CD4-positive, alpha-beta T cell (primary cell): ENCODE measurements at regions of chr3 and their contacts with region 1.

Region 1: DNA sequence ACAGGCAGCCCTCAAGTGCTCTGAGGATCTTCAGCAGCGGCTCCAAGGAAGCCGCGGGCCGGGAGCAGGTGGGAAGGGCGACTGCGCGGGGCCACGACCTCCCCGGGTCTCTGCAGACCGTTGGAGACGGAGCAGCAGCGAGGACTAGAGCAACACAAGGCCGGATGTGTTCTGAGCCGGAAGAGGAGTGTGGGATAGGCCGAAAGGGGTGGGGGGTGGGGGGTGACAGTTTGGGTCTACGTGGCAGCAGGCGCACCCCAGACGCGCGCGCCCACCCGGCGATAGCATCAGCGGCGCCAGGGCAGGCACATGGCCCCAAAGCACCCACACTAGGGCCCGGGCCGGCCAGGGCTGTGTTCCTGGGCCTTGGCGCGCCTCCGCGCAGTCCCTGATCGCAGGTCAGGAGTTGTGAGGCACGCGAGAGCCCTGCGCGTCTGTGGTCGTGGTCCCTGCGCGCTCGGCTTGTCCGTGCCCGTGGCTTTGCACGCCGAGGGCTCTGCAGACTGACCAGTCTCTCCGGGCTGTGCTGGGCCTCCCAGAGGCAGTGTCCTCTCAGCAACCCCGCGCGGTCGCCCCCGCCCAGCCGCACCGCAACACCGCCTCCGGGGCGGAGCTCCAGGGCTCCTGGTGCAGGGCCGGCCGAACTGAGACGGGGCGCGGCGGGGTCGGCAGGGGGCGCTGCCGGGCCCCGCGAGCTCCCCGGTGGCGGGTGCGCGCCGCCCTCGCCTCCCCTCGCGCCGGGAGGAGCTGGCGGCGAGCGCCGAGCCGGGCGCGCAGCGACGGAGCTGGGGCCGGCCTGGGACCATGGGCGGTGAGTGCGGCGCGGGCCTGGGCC is at the start of gene PXYLP1:
- DNase-seq: peak; percentile 80 to 94 (median 89)
- ATAC-seq: peak; percentile 89
- H3K4me3 ChIP-seq: peak within 1 kb of the TSS; percentile 88
- H3K4me3 Mint-ChIP-seq: peak within 1 kb of the TSS; percentile 96
- H3K27ac ChIP-seq: peak within 1 kb of the TSS; percentile 76 to 86
- H3K27ac Mint-ChIP-seq: peak within 1 kb of the TSS; percentile 96
- H3K4me1 ChIP-seq: peaks cover 51% of the 10 kb centered on the region
- H3K4me1 Mint-ChIP-seq: peaks cover 66% of the 10 kb centered on the region
- H3K27me3 ChIP-seq: no peaks in the 10 kb centered on the region
- H3K27me3 Mint-ChIP-seq: no peaks in the 10 kb centered on the region
- CTCF ChIP-seq: peak; percentile 38
- total RNA-seq, gene PXYLP1: 21.2 to 22.6 TPM

Region 2: GRCh38 chr3:141243271-141243707 is 12.0 kb after region 1 on chr3:
- CTCF ChIA-PET with region 1: interaction called, 14 read pairs
- POLR2A ChIA-PET with region 1: interaction called, 64 read pairs
- intact Hi-C with region 1: no loop called
- DNase-seq: peak in 13 of 14 experiments; percentile 24 to 81 (median 63)
- ATAC-seq: peak; percentile 95
- H3K4me3 ChIP-seq: no peak overlapping the region
- H3K4me3 Mint-ChIP-seq: peak overlapping the region; percentile 74
- H3K27ac ChIP-seq: peak overlapping the region in 1 of 2 donors; percentile 51
- H3K27ac Mint-ChIP-seq: peak overlapping the region; percentile 91
- H3K4me1 ChIP-seq: peaks cover 34% of the 10 kb centered on the region
- H3K4me1 Mint-ChIP-seq: peaks cover 60% of the 10 kb centered on the region
- H3K27me3 ChIP-seq: no peaks in the 10 kb centered on the region
- H3K27me3 Mint-ChIP-seq: no peaks in the 10 kb centered on the region
- CTCF ChIP-seq: no peak

Region 3: GRCh38 chr3:141255846-141256261 is 24.5 kb after region 1 on chr3:
- CTCF ChIA-PET with region 1: interaction called, 44 read pairs
- POLR2A ChIA-PET with region 1: interaction called, 320 read pairs
- intact Hi-C with region 1: loop called (anchors 1 kb)
- DNase-seq: peak in 9 of 14 experiments; percentile 15 to 83 (median 52)
- ATAC-seq: peak; percentile 97
- H3K4me3 ChIP-seq: no peak overlapping the region
- H3K4me3 Mint-ChIP-seq: no peak overlapping the region
- H3K27ac ChIP-seq: no peak overlapping the region
- H3K27ac Mint-ChIP-seq: peak overlapping the region; percentile 69
- H3K4me1 ChIP-seq: peaks cover 15% of the 10 kb centered on the region
- H3K4me1 Mint-ChIP-seq: peaks cover 56% of the 10 kb centered on the region
- H3K27me3 ChIP-seq: no peaks in the 10 kb centered on the region
- H3K27me3 Mint-ChIP-seq: no peaks in the 10 kb centered on the region
- CTCF ChIP-seq: peak; percentile 64

Region 4: DNA sequence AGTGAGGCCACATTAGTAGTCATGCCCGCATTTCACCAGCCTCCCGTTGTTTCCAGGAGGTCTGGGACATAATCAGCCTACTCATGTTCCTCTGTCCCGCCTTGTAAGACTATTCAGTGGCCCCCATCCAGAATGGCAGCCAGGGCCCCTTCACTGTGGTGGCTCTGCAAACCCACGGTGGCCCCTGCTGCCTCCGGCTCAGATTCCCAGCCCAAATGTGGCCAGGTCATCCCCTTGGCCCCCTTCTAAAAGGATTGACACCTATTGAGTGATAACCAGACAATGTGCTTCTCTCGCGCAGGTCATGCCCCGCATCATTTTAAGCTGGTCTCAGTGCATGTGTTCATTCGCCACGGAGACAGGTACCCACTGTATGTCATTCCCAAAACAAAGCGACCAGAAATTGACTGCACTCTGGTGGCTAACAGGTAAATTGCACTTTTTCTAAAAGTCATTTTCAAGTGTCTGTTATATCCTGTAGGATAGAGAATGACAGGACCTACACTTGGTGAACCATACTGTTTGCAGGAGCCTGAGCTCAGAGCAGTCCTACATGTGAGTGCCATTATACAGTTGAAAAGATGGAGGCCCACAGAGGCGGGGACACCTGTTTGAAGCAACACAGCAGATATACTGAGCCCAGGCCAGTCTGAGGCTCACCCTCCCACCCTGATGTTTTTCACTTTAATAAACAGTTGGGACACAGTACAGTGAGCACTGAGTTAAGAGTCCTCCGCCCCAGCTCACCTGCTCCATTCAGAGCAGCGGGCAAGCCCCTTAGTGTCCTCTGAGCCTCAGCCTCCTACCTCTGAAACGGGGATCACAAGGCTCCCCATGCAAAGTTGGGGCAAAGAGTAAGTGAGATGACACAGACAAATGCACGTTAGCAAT is 48.0 kb after region 1 on chr3:
- CTCF ChIA-PET with region 1: interaction called, 10 read pairs
- POLR2A ChIA-PET with region 1: interaction called, 54 read pairs
- intact Hi-C with region 1: loop called (anchors 1 kb)
- DNase-seq: peak in 4 of 14 experiments; percentile 38 to 61 (median 58)
- ATAC-seq: peak; percentile 87
- H3K4me3 ChIP-seq: no peak overlapping the region
- H3K4me3 Mint-ChIP-seq: no peak overlapping the region
- H3K27ac ChIP-seq: no peak overlapping the region
- H3K27ac Mint-ChIP-seq: no peak overlapping the region
- H3K4me1 ChIP-seq: peaks cover 20% of the 10 kb centered on the region
- H3K4me1 Mint-ChIP-seq: peaks cover 28% of the 10 kb centered on the region
- H3K27me3 ChIP-seq: no peaks in the 10 kb centered on the region
- H3K27me3 Mint-ChIP-seq: no peaks in the 10 kb centered on the region
- CTCF ChIP-seq: peak; percentile 77

Region 5: DNA sequence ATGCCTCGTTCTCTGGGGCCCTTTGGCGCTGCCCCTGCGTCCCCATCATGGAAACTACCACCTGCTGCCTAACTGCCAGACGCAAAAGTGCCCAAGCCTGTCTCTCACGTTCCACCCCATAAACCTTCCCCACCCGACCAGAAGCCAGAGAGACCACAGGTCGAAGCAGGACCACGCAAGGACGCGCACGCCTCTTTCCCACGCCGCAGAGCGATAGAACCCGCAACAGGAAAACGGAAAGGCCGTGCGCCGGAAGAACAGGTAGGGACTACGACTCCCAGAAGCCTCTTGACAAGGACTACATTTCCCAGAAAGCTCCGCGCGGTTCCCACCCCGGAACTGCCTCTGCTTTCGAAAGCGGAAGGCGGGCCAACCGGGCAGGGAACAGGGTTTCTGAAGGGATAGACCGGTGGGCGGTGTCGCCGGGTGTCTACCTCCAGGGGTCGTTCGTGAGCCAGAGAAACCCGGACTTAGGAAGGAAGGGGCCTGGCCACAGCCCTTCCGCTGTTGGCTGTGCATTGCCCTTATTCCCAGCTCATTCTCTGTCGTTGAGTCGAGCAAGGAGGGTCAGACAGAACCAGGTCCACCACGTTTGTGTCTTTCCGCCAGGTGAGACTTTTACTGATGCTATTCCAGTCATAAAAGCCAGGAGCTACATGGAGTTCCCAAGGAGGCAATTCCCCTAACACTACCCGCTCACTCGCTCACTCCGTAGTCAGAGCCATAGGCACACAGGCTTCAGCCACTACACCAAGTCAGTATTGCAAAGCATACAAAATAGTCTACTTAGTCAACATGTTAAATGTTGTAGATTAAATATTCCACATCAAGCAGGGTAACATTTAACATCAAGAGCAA is 80.4 kb after region 1 on chr3:
- CTCF ChIA-PET with region 1: interaction called, 12 read pairs
- POLR2A ChIA-PET with region 1: interaction called, 46 read pairs
- intact Hi-C with region 1: loop called in 1 of 2 experiments (anchors 10 kb)
- DNase-seq: peak; percentile 93 to 99 (median 97)
- ATAC-seq: peak; percentile 88
- H3K4me3 ChIP-seq: peak overlapping the region; percentile 86
- H3K4me3 Mint-ChIP-seq: peak overlapping the region; percentile 97
- H3K27ac ChIP-seq: peak overlapping the region; percentile 62 to 75
- H3K27ac Mint-ChIP-seq: peak overlapping the region; percentile 92
- H3K4me1 ChIP-seq: peaks cover 48% of the 10 kb centered on the region
- H3K4me1 Mint-ChIP-seq: peaks cover 67% of the 10 kb centered on the region
- H3K27me3 ChIP-seq: no peaks in the 10 kb centered on the region
- H3K27me3 Mint-ChIP-seq: no peaks in the 10 kb centered on the region
- CTCF ChIP-seq: peak; percentile 65

Region 6: GRCh38 chr3:141452036-141452435 is 220.7 kb after region 1 on chr3:
- CTCF ChIA-PET with region 1: interaction called, 4 read pairs
- POLR2A ChIA-PET with region 1: interaction called, 15 read pairs
- intact Hi-C with region 1: loop called (anchors 5 kb)
- DNase-seq: peak in 10 of 14 experiments; percentile 15 to 81 (median 45)
- ATAC-seq: peak; percentile 96
- H3K4me3 ChIP-seq: no peak overlapping the region
- H3K4me3 Mint-ChIP-seq: no peak overlapping the region
- H3K27ac ChIP-seq: peak overlapping the region in 1 of 2 donors; percentile 11
- H3K27ac Mint-ChIP-seq: no peak overlapping the region
- H3K4me1 ChIP-seq: peaks cover 14% of the 10 kb centered on the region
- H3K4me1 Mint-ChIP-seq: peaks cover 14% of the 10 kb centered on the region
- H3K27me3 ChIP-seq: no peaks in the 10 kb centered on the region
- H3K27me3 Mint-ChIP-seq: no peaks in the 10 kb centered on the region
- CTCF ChIP-seq: peak; percentile 88

Region 7: DNA sequence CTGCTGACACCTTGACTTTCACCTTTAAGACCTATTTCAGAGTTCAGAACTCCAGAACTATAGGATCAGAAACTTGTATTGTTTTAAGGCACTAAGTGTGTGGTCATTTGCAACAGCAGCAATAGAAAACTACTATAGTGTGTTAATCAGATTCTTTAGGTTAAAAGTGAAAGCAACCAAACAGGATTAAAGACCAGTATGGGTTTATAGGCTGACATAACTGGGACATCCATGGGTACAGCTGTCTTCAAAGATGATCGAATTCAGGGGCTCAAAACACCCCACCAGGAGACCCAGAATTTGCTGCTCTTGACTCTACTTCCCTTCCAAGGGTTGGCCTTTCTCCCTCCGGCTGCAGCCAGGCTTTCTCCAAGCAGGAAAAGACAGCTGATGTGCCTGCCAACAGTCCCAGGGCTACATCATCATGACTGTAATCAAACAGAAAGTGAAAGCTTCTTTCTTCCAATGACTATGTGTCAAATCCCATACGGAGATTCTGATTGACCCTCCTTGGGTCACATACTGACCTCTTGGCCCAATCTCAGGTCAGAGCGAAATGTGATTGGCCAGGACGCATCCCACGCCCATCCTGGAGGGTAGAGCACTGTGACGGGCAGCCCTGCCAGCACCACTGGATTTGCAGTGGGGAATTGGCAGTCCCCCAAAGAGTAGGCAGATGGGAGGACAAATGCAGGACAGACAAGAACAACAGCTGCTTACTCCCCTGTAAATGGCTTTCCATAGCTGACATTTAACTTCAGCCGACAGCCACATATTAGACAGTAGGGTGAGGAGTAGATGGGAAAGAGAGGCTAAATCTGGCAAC is 455.4 kb after region 1 on chr3:
- CTCF ChIA-PET with region 1: no interaction called
- POLR2A ChIA-PET with region 1: no interaction called
- intact Hi-C with region 1: no loop called
- DNase-seq: peak in 3 of 14 experiments; percentile 7 to 36 (median 35)
- ATAC-seq: no peak
- H3K4me3 ChIP-seq: peak overlapping the region; percentile 41
- H3K4me3 Mint-ChIP-seq: peak overlapping the region; percentile 81
- H3K27ac ChIP-seq: no peak overlapping the region
- H3K27ac Mint-ChIP-seq: peak overlapping the region; percentile 49
- H3K4me1 ChIP-seq: peaks cover 13% of the 10 kb centered on the region
- H3K4me1 Mint-ChIP-seq: peaks cover 22% of the 10 kb centered on the region
- H3K27me3 ChIP-seq: no peaks in the 10 kb centered on the region
- H3K27me3 Mint-ChIP-seq: no peaks in the 10 kb centered on the region
- CTCF ChIP-seq: no peak

Region 8: DNA sequence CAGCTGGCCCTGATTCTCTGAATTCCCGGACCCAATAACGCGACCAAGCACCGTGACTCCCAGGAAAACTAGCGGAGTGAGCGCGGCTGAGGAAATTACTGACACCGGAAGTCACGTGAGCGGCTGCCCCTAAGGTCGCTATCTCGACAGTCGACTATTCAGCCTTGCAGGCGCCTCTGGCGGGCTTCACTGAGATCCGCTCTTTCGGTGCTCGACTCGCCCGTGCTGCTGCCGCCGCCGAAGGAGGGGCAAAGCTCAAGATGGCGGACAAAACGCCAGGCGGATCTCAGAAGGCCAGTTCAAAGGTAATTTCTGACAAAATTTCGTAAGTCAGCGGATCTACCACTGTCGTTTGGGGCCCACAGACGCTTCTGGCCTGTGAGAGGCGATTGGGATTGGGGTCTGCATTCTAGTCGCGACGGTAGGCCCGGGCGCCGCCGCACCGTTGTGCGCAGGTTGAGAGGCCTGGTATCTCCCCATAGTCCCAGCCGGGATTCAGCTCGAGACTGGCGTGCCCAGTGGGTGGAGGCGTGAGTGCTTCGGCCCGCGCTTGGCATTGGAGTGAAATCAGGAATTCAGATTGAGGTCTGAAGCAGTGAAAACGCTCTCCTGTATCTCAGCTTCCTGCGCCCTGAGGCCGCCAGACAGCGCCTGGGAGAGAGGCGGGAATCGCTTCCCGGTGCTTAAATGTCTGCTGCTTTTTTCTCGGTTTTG is 1770.2 kb after region 1 on chr3 and contains the start of gene U2SURP:
- CTCF ChIA-PET with region 1: no interaction called
- POLR2A ChIA-PET with region 1: interaction called, 10 read pairs
- intact Hi-C with region 1: no loop called
- DNase-seq: peak; percentile 83 to 96 (median 86)
- ATAC-seq: peak; percentile 93
- H3K4me3 ChIP-seq: peak within 1 kb of the TSS; percentile 89
- H3K4me3 Mint-ChIP-seq: peak within 1 kb of the TSS; percentile 97
- H3K27ac ChIP-seq: peak within 1 kb of the TSS; percentile 93 to 94
- H3K27ac Mint-ChIP-seq: peak within 1 kb of the TSS; percentile 97
- H3K4me1 ChIP-seq: peaks cover 23% of the 10 kb centered on the region
- H3K4me1 Mint-ChIP-seq: peaks cover 55% of the 10 kb centered on the region
- H3K27me3 ChIP-seq: peaks cover 0 to 4% of the 10 kb centered on the region in 2 experiments
- H3K27me3 Mint-ChIP-seq: peaks cover 14% of the 10 kb centered on the region
- CTCF ChIP-seq: no peak
- total RNA-seq, gene U2SURP: 164 to 179 TPM